ENCODE measurements at regions of chr11 and their contacts with region 1.

Region 1: GRCh38 chr11:96254087-96254486 is 88.9 kb downstream of the MAML2 start:
- DNase-seq: peak; percentile 91
- ATAC-seq: peak; percentile 58
- H3K4me3 ChIP-seq: peak overlapping the region; percentile 34
- H3K27ac ChIP-seq: peak overlapping the region; percentile 34
- H3K4me1 ChIP-seq: peaks cover 60% of the 10 kb centered on the region
- H3K27me3 ChIP-seq: no peaks in the 10 kb centered on the region
- CTCF ChIP-seq: no peak
- EP300 ChIP-seq: peak; percentile 19 to 62; a peak in 1 of 4 replicates
- POLR2A ChIP-seq: no peak
- RAD21 ChIP-seq: peak; percentile 23; the same call in 1 of the 2 replicates

Region 2: GRCh38 chr11:96054870-96055705 is 199.0 kb before region 1 on chr11:
- CTCF ChIA-PET with region 1: interaction called, 10 read pairs
- POLR2A ChIA-PET with region 1: no interaction called
- RAD21 ChIA-PET with region 1: no interaction called
- SMC1A ChIA-PET with region 1: interaction called, 5 read pairs
- in situ Hi-C with region 1: no loop called
- intact Hi-C with region 1: no loop called
- DNase-seq: no peak
- ATAC-seq: no peak
- H3K4me3 ChIP-seq: no peak overlapping the region
- H3K27ac ChIP-seq: no peak overlapping the region
- H3K4me1 ChIP-seq: peaks cover 27% of the 10 kb centered on the region
- H3K27me3 ChIP-seq: no peaks in the 10 kb centered on the region
- CTCF ChIP-seq: peak; percentile 46 to 58 (median 48)
- EP300 ChIP-seq: no peak
- POLR2A ChIP-seq: no peak
- RAD21 ChIP-seq: peak; percentile 63

Region 3: DNA sequence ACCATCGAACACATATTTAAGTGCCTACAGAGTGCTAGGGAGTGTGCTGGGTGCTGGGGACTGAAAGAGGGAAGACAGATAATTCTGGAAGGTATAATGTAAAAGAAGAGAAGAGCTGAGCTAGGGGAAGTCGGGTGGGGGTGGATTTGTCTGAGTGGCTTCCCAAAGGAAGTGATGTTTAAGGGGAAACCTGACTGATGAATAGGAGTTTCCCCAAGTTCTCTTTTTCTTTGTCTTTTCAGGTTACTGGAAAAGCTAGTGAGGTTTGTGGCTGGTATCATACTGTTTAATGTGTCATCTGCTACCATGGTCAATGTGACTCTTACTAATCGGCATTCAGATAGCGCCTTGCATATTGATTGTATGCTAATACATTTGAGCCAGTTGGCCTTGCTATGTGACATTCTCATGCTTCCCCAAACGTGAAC is 178.5 kb before region 1 on chr11:
- CTCF ChIA-PET with region 1: no interaction called
- POLR2A ChIA-PET with region 1: no interaction called
- RAD21 ChIA-PET with region 1: interaction called, 10 read pairs
- SMC1A ChIA-PET with region 1: interaction called, 3 read pairs
- in situ Hi-C with region 1: no loop called
- intact Hi-C with region 1: no loop called
- DNase-seq: peak; percentile 74
- ATAC-seq: peak; percentile 93
- H3K4me3 ChIP-seq: 0 out of 2 replicates have a peak overlapping the region, but pooled peaks have one; percentile 30
- H3K27ac ChIP-seq: peak overlapping the region; percentile 62
- H3K4me1 ChIP-seq: peaks cover 27% of the 10 kb centered on the region
- H3K27me3 ChIP-seq: no peaks in the 10 kb centered on the region
- CTCF ChIP-seq: no peak
- EP300 ChIP-seq: peak; percentile 17 to 36; a peak in 1 of 4 replicates
- POLR2A ChIP-seq: no peak
- RAD21 ChIP-seq: no peak

Region 4: DNA sequence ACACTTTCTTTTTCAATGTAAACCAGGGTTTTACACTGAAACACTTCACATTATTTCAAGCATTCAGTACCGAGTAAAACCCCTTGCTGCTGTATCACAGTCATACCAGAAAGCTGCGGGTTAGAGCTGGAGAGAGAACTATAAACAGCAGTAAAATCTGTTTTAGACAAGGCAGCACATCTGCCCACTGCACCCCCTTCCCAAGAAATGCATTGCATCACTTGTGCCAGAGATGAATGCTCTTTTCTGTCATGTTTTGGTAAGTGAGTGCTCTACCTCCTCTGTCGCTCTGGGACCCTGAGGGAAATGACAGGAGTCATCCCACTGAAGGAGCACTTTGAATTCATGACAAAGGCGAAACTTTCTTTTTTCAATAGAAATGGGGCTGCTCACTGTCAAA is 18.3 kb before region 1 on chr11:
- CTCF ChIA-PET with region 1: interaction called, 4 read pairs
- POLR2A ChIA-PET with region 1: interaction called, 3 read pairs
- RAD21 ChIA-PET with region 1: interaction called, 4 read pairs
- SMC1A ChIA-PET with region 1: interaction called, 46 read pairs
- in situ Hi-C with region 1: no loop called
- intact Hi-C with region 1: no loop called
- DNase-seq: no peak
- ATAC-seq: peak; percentile 98
- H3K4me3 ChIP-seq: no peak overlapping the region
- H3K27ac ChIP-seq: peak overlapping the region; percentile 53
- H3K4me1 ChIP-seq: peaks cover 7% of the 10 kb centered on the region
- H3K27me3 ChIP-seq: no peaks in the 10 kb centered on the region
- CTCF ChIP-seq: no peak
- EP300 ChIP-seq: no peak; a peak in 1 of 4 replicates
- POLR2A ChIP-seq: no peak
- RAD21 ChIP-seq: 0 out of 2 replicates have a peak, but pooled peaks have one; percentile 9

Region 5: GRCh38 chr11:96242971-96243647 is 11.0 kb before region 1 on chr11:
- CTCF ChIA-PET with region 1: interaction called, 10 read pairs
- POLR2A ChIA-PET with region 1: interaction called, 50 read pairs
- RAD21 ChIA-PET with region 1: interaction called, 34 read pairs
- SMC1A ChIA-PET with region 1: interaction called, 46 read pairs
- in situ Hi-C with region 1: no loop called
- intact Hi-C with region 1: no loop called
- DNase-seq: peak; percentile 86
- ATAC-seq: peak; percentile 93
- H3K4me3 ChIP-seq: peak overlapping the region; percentile 60
- H3K27ac ChIP-seq: peak overlapping the region; percentile 68
- H3K4me1 ChIP-seq: peaks cover 14% of the 10 kb centered on the region; the same call in 1 of the 2 replicates
- H3K27me3 ChIP-seq: no peaks in the 10 kb centered on the region
- CTCF ChIP-seq: no peak
- EP300 ChIP-seq: no peak
- POLR2A ChIP-seq: peak; percentile 73
- RAD21 ChIP-seq: no peak; the same call in 1 of the 2 replicates

Region 6: GRCh38 chr11:96293598-96294021 is 39.5 kb after region 1 on chr11:
- CTCF ChIA-PET with region 1: interaction called, 3 read pairs
- POLR2A ChIA-PET with region 1: no interaction called
- RAD21 ChIA-PET with region 1: interaction called, 4 read pairs
- SMC1A ChIA-PET with region 1: interaction called, 4 read pairs
- in situ Hi-C with region 1: no loop called
- intact Hi-C with region 1: loop called (anchors 2 kb)
- DNase-seq: peak; percentile 69
- ATAC-seq: peak; percentile 91
- H3K4me3 ChIP-seq: peak overlapping the region; percentile 34; the same call in 1 of the 2 replicates
- H3K27ac ChIP-seq: peak overlapping the region; percentile 65
- H3K4me1 ChIP-seq: peaks cover 32% of the 10 kb centered on the region
- H3K27me3 ChIP-seq: no peaks in the 10 kb centered on the region
- CTCF ChIP-seq: no peak
- EP300 ChIP-seq: no peak; a peak in 1 of 4 replicates
- POLR2A ChIP-seq: no peak
- RAD21 ChIP-seq: no peak

Measured in GM12878 (cell line).